ENCODE measurements at regions of chr3 and their contacts with region 1.

Region 1: DNA sequence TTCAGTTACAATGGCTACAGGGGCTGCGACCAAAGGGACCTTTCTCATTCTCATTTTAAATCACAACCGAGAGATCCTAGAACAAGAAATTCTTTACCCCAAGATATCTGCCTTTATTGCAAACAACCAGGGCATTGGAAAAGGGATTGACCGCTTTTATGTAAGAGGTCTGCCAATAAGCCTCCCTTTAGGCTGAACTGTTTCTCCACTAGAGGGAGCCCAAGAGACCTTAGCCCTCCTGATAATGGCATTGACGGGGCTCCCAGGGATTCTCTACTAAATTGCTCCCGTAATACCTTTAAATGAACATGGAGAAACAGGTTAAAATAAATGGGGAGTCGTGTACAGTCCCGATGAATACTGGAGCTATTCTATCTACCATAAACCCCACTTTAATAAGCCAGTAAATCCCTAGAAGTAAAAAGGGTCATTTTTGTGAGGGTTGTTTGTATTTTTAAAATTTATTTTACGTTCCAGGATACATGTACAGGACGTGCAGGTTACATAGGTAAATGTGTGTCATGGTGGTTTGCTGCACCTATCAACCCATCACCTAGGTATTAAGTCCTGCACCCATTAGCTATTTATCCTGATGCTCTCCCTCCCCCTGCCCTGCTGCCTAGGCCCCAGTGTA is 7.5 kb upstream of the IGSF10 start:
- DNase-seq: peak; percentile 24 to 27
- H3K4me3 ChIP-seq: no peak overlapping the region
- H3K27ac ChIP-seq: no peak overlapping the region
- H3K4me1 ChIP-seq: no peaks in the 10 kb centered on the region
- H3K27me3 ChIP-seq: no peaks in the 10 kb centered on the region
- CTCF ChIP-seq: peak; percentile 40 to 82 (median 58)
- POLR2A ChIP-seq: no peak

Region 2: GRCh38 chr3:151377768-151378385 is 90.5 kb before region 1 on chr3:
- intact Hi-C with region 1: no loop called
- DNase-seq: no peak
- H3K4me3 ChIP-seq: no peak overlapping the region
- H3K27ac ChIP-seq: no peak overlapping the region
- H3K4me1 ChIP-seq: no peaks in the 10 kb centered on the region
- H3K27me3 ChIP-seq: no peaks in the 10 kb centered on the region
- CTCF ChIP-seq: no peak
- POLR2A ChIP-seq: no peak

Region 3: GRCh38 chr3:151644020-151644620 is 175.7 kb after region 1 on chr3:
- intact Hi-C with region 1: loop called (anchors 10 kb)
- DNase-seq: no peak
- H3K4me3 ChIP-seq: no peak overlapping the region
- H3K27ac ChIP-seq: no peak overlapping the region
- H3K4me1 ChIP-seq: no peaks in the 10 kb centered on the region
- H3K27me3 ChIP-seq: no peaks in the 10 kb centered on the region
- CTCF ChIP-seq: no peak
- POLR2A ChIP-seq: no peak

Region 4: DNA sequence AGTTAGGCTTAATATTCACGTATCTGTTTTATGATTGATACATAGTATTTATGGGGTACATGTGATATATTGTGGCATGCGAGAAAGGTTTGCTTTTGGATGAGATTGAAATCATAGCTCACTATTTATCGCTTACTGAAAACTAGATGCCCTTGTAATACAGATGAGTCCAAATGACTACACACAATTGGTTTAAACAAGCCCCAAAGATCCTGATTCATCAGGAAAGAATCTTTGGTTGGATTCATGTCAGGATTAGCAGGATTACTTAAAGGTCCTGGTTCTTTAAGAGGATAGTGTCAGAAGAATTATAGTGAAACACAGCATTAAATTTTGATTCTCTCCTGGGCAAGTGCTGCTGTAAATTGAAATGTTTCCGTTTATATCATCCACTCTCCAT is 326.9 kb after region 1 on chr3:
- intact Hi-C with region 1: no loop called
- DNase-seq: no peak
- H3K4me3 ChIP-seq: no peak overlapping the region
- H3K27ac ChIP-seq: no peak overlapping the region
- H3K4me1 ChIP-seq: no peaks in the 10 kb centered on the region
- H3K27me3 ChIP-seq: no peaks in the 10 kb centered on the region
- CTCF ChIP-seq: no peak
- POLR2A ChIP-seq: no peak

Region 5: DNA sequence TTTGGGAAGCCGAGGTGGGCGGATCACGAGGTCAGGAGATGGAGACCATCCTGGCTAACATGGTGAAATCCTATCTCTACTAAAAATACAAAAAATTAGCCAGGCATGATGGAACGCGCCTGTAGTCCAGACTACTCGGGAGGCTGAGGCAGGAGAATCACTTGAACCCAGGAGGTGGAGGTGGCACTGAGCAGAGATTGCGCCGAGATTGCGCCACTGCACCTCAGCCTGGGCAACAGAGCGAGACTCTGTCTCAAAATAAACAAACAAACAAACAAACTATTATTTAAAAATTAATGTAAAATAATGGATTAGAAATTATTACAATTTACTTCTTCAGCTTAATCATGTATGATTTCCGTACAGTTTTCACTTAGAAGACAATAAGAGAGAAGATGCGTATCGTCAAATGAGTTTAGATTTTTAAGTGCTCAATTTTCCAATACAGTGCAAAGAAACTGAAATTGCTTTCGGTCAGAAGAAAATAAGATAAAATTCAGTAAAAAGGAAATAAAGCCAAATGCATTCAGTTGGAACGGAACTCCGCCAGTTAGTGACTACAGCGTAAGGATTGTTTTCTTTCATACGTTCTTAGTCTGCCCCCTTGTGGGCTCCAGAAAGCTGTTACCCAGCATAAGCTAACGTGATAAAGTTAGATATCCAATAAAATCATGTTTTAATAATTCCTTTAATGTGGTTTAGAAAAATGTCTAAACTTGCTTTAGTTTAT is 370.3 kb after region 1 on chr3:
- intact Hi-C with region 1: loop called (anchors 5 kb)
- DNase-seq: peak; percentile 37 to 55
- H3K4me3 ChIP-seq: no peak overlapping the region
- H3K27ac ChIP-seq: no peak overlapping the region
- H3K4me1 ChIP-seq: peaks cover 0 to 11% of the 10 kb centered on the region in 2 donors
- H3K27me3 ChIP-seq: no peaks in the 10 kb centered on the region
- CTCF ChIP-seq: peak; percentile 67 to 86 (median 75)
- POLR2A ChIP-seq: no peak

Region 6: GRCh38 chr3:151890721-151891141 is 422.3 kb after region 1 on chr3:
- intact Hi-C with region 1: no loop called
- DNase-seq: no peak
- H3K4me3 ChIP-seq: no peak overlapping the region
- H3K27ac ChIP-seq: no peak overlapping the region
- H3K4me1 ChIP-seq: no peaks in the 10 kb centered on the region
- H3K27me3 ChIP-seq: no peaks in the 10 kb centered on the region
- CTCF ChIP-seq: no peak
- POLR2A ChIP-seq: no peak